HEK293T (cell line): ENCODE measurements at regions of chr11 and their contacts with region 1.

Region 1: DNA sequence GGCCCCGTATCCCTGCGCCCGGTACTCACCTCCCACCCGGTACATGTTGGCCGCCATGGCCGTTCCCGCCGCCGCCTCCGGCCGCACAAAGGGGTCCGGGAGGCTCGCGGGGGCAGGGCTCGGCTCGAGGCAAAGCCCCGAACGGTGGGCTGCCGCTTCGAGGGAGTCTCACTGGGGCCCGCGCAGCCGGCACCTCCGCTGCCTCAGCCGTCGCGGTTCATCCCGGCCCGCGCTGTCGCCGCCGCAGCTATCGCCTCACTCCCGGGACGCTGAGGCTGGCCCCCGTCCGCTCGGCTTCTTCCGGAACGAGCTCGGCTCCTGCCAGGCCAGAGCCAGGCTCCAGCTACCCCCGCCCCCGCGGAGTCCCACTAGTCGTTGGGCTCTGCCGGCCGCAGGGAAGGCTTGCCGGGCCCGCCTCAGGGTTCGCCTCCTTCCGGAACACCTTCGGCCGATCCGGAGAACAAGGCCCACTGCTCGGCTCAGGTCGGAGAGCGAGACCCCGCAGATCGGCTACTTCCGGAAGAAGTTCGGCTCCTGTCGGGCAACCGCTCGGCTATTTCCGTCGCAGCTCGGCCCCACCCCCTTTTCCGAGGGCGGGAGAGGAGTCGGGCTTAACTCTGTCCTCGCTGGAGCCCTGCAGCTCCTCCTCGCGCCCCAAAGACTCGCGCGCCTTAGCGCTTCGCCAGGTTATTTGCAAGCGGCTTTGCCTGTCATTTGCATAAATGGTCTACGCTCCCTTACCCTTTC is at the start of gene MTA2:
- DNase-seq: peak; percentile 97

Region 2: DNA sequence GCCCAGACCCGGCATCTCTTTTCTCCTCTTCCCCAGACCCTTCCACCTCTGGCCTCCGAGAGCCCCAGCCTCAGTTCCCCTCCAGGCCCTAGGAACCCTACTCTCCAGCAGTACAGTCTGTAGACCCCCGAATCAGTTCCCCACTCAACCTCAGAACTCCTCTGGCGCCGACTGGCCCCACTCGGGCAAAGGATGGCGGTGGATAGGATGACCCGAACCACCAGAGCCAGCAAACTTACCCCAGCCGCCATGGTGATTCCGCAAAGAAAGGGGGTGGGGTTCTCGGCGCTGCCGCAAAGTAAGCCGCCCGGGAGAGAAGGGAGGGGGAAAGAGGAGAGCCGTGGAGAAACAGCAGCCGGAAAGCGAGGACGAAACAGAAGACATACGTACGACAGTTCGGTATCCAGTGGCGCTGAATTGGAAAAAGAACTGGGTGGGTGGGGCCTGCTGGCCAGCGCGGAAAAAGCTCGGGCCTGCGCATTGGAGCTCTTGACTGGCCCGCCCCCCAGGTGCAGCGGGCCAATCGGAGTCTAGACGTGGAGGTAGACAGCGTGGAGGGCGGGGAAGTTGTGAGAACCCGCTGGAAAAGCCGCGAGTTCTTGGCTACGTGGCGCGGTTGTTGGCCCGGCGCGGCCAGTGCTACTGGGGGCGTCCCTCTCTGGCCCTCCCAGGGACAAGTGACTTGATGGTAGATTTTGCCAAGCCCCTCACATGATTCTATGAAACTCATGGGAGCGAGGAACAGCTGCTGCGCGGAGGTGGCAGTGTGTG is 27.8 kb before region 1 on chr11 and contains the start of gene EEF1G:
- CTCF ChIA-PET with region 1: no interaction called
- POLR2A ChIA-PET with region 1: interaction called, 18 read pairs
- DNase-seq: peak; percentile 98

Region 3: GRCh38 chr11:62612366-62613290 is 11.1 kb after region 1 on chr11 and contains the starts of genes EML3 and ROM1:
- CTCF ChIA-PET with region 1: interaction called, 9 read pairs
- POLR2A ChIA-PET with region 1: interaction called, 15 read pairs
- DNase-seq: peak; percentile 76

Region 4: GRCh38 chr11:62621567-62622470 is 20.3 kb after region 1 on chr11 and contains the start of gene B3GAT3:
- CTCF ChIA-PET with region 1: interaction called, 4 read pairs
- POLR2A ChIA-PET with region 1: interaction called, 21 read pairs
- DNase-seq: peak; percentile 98